Left ventricle myocardium superior (tissue), 1 donor: ENCODE measurements at regions of chr11 and their contacts with region 1.

Region 1: DNA sequence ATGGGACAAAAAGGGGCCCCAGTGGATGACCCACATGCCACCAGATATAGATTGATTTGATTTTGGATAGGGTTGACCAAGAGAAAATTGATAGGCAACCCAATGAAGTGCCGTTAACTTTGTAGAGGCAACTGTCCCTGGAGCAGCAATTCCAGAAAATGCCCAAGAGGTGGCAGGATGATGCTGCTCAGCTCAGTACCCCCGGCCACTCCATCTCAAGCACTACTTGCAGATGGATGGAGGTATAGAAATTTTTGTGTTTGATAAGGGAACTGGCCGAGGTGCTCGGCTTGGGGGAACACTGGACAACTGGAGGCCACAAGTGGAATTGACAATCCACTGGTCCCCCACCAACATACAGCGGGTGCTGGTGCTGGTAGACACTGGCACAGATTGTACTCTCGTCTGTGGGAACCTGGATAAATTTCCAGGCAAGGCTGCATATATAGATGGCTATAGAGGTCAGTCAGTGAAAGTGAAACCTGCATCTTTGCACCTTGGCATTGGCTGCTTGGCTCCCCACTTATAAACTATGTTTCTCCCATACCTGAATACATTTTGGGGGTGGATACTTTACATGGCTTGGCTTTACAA is 86.3 kb downstream of the CCDC83 start:
- DNase-seq: peak; percentile 41
- ATAC-seq: peak; percentile 82

Region 2: GRCh38 chr11:85495918-85496317 is 445.6 kb before region 1 on chr11:
- intact Hi-C with region 1: no loop called
- DNase-seq: no peak
- ATAC-seq: no peak

Region 3: DNA sequence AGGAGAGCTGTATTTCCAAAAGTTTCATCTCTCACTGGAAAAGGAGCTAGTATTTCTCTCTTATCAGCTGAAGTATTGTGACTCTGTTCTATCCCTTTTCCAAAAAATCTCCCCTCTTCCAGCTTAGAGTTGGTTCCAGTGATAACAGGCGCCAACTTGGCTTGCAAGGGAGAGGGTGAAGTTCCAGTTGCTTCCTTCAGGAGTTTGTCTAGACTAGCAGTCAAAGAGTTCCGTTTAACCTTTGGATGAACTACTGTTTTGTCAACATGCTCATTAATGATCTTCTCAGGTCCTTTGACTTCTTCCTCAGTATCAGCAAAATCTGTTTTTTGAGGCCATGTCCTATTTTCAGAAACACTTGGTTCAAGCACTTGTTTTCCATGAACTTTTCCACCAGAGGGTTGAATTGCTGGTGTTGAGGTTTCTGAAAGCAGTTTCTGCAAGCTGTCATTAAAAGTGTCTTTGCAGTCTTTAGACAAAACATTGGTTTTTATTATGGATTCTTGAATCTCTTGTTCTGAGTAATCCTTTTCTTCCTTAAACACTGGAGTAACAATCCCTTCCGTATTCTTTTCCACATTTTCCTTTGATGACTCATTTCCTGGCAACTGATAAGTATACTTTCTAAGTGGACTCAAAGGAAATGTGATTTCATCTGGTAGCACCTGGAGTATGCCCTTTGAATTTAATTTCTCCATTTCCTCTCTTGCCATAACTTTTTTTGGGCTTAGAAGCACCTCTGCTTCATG is 215.8 kb before region 1 on chr11:
- intact Hi-C with region 1: no loop called
- DNase-seq: no peak
- ATAC-seq: peak; percentile 21

Region 4: DNA sequence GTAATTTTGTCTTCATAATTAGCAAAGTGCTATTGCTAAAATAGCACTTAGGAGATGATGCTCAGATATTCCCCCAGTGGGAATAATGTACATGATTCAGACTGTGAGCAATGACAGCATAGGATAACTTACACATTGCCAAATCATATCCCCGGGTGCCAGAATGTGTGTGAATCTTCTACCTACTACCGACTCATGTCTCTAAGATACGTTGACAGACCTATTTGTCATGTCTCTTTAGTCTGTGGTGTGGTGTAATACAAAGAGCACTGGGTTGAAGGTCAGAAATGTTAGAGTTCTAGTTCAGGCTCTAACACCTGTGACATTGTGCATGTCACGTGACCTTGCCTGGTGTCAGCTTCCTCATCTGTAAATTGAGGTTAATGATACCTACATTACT is 158.4 kb after region 1 on chr11:
- intact Hi-C with region 1: no loop called
- DNase-seq: no peak
- ATAC-seq: no peak

Region 5: GRCh38 chr11:86291466-86292262 is 350.2 kb after region 1 on chr11:
- intact Hi-C with region 1: loop called (anchors 5 kb)
- DNase-seq: no peak
- ATAC-seq: peak; percentile 40